ENCODE measurements at regions of chr19 and their contacts with region 1.

Region 1: DNA sequence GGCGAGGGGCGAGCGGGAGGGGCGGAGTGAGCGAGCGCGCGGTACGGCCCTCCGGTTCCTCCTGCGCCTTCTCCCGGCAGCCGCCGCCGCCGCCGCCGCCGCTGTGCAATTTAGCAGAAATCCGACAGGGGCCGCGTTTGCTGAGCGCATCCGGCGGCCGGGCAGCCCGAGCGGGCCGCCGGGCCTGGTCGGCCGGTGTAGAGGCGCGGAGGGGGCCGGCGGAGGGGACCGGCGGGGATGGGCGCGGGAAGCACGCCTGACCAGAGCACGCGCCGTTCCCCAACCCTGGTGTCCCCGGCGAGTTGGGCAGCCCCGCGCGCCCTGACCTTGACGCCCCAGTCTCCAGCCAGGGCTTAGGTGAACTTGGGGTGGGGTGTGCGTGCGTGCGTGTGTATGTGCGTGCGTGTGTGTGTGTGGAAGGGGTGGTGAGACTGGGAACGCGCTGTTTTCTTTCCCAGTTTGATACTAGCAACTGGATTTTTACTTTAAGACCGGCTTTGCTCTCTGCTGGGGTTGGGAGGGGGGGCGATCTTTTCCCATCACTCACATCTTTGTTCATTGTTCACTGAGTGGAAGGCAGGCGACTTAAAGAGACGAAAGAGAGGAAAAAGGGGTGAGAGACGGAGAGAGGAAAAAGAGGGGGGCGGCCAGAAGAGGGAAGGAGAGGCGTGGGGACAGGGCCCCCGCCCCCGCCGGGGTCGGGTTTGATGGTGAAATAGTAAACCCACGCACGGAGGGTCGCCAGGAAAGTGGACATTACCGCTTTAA is 144.3 kb upstream of the ZNF536 start:
- ATAC-seq: peak; percentile 58 to 75 (median 59)
- H3K4me3 ChIP-seq: peak overlapping the region; percentile 61 to 94 (median 63)
- H3K27ac ChIP-seq: peak overlapping the region; percentile 70 to 77
- H3K4me1 ChIP-seq: peaks cover 28 to 30% of the 10 kb centered on the region in 2 donors

Region 2: GRCh38 chr19:30374865-30375552 is 147.2 kb after region 1 on chr19:
- in situ Hi-C with region 1: loop called in 1 of 9 experiments (anchors 25 kb)
- ATAC-seq: peak in 7 of 8 experiments; percentile 54 to 78 (median 59)
- H3K4me3 ChIP-seq: peak overlapping the region; percentile 29 to 44 (median 36)
- H3K27ac ChIP-seq: no peak overlapping the region
- H3K4me1 ChIP-seq: peaks cover 38 to 47% of the 10 kb centered on the region in 2 donors